ENCODE measurements at regions of chr7 and their contacts with region 1.

Region 1: DNA sequence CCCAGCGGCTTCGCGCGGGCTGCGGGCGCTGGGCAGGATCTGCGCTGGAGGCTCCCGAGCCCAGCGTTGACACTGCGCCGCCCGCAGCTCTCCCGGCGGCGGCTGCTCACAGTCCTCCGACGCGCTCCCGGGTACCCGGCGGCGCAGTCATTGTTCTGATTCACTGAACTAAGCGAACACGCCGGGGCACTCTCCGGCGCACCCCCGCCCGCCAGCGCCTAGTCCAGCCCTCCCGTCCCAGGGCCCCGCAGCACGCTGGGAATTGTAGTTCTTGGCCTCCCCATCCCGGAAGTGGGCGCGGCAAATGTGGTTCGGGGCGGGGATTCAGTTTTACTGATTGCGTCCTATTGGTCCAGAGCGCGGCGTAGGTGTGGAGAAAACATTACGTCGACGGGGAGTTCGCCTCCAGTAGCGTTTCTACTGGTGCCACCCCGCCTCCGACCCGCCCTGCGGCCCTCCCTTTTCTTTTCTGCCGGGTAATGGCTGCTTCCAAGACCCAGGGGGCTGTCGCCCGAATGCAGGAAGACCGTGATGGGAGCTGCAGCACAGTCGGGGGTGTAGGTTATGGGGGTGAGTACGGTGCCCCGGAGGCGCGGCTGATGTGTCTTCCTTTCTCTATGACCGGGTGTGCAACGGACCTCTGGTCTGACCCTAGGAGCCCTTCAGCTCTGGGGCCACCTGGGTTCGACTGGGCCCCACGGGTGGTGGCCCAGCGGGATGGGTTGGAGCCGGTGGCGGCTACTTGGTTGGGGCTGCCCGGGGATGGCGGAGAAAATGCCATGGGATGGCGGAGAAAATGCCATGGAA is at the starts of genes DOCK4 and ZNF277:
- DNase-seq: peak; percentile 98 to 100 (median 99)
- ATAC-seq: peak; percentile 86
- H3K4me3 ChIP-seq: peak within 1 kb of the TSS; percentile 89 to 94
- H3K4me3 Mint-ChIP-seq: peak within 1 kb of the TSS; percentile 97
- H3K27ac ChIP-seq: peak within 1 kb of the TSS; percentile 60 to 71
- H3K27ac Mint-ChIP-seq: peak within 1 kb of the TSS; percentile 90
- H3K4me1 ChIP-seq: peaks cover 28% of the 10 kb centered on the region
- H3K4me1 Mint-ChIP-seq: peaks cover 48% of the 10 kb centered on the region
- H3K27me3 ChIP-seq: peaks cover 4 to 23% of the 10 kb centered on the region in 2 experiments
- H3K27me3 Mint-ChIP-seq: peaks cover 25% of the 10 kb centered on the region
- CTCF ChIP-seq: no peak
- total RNA-seq, gene DOCK4: 0.16 to 0.17 TPM
- total RNA-seq, gene ZNF277: 19.6 to 22.5 TPM

Region 2: DNA sequence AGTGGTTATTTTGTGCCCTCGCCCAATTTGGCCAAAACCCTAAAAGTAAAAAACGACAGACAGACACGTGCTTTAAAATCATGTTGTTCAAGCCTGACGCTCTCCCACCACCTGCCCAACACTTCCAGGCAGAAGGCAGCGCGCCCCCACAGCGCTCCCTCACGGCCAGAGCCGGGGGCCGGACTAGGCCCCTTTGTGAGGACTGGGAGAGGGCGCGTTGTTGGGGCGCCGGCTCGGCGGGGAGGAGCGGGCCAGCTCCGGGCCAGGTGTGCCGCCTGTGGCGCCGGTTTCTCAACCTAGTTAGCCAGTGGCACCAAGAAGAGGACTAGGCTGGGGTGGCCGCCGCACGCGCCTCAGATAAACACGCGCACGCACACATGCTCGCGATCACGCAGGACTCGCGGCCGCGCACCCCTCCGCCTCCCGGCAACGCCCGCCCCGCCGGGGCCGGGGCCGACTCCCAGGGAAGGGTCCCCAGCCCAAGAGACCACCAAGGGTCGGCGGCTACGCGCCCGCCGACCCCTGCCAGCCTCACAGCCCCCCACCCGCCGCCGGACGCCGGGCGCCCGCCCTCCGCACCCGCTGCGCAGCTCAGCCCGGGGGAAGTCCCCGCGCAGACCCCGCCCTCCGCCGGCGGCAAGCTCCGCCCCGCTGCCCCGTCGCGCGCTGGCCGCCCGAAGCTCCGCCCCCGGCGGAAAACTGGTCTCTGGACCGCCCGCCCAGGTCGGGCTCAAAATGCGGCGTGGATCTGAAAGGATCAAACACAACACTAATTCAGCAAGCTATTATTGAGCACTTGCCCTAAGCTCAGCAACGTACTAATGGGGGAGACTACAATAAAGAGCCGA is 644.3 kb before region 1 on chr7 and contains the start of gene IMMP2L:
- CTCF ChIA-PET with region 1: no interaction called
- POLR2A ChIA-PET with region 1: no interaction called
- intact Hi-C with region 1: loop called (anchors 1 to 5 kb)
- DNase-seq: peak; percentile 82 to 95 (median 90)
- ATAC-seq: peak; percentile 95
- H3K4me3 ChIP-seq: peak within 1 kb of the TSS; percentile 61 to 85
- H3K4me3 Mint-ChIP-seq: peak within 1 kb of the TSS; percentile 92
- H3K27ac ChIP-seq: peak within 1 kb of the TSS; percentile 77 to 82
- H3K27ac Mint-ChIP-seq: peak within 1 kb of the TSS; percentile 96
- H3K4me1 ChIP-seq: peaks cover 18% of the 10 kb centered on the region
- H3K4me1 Mint-ChIP-seq: peaks cover 43% of the 10 kb centered on the region
- H3K27me3 ChIP-seq: no peaks in the 10 kb centered on the region
- H3K27me3 Mint-ChIP-seq: peaks cover 3% of the 10 kb centered on the region
- CTCF ChIP-seq: peak; percentile 15
- total RNA-seq, gene IMMP2L: 9.8 to 12.7 TPM

Region 3: GRCh38 chr7:112226701-112227276 is 20.3 kb after region 1 on chr7:
- CTCF ChIA-PET with region 1: no interaction called
- POLR2A ChIA-PET with region 1: no interaction called
- intact Hi-C with region 1: no loop called
- DNase-seq: no peak
- ATAC-seq: no peak
- H3K4me3 ChIP-seq: no peak overlapping the region
- H3K4me3 Mint-ChIP-seq: no peak overlapping the region
- H3K27ac ChIP-seq: no peak overlapping the region
- H3K27ac Mint-ChIP-seq: no peak overlapping the region
- H3K4me1 ChIP-seq: no peaks in the 10 kb centered on the region
- H3K4me1 Mint-ChIP-seq: peaks cover 51% of the 10 kb centered on the region
- H3K27me3 ChIP-seq: no peaks in the 10 kb centered on the region
- H3K27me3 Mint-ChIP-seq: no peaks in the 10 kb centered on the region
- CTCF ChIP-seq: no peak

Region 4: DNA sequence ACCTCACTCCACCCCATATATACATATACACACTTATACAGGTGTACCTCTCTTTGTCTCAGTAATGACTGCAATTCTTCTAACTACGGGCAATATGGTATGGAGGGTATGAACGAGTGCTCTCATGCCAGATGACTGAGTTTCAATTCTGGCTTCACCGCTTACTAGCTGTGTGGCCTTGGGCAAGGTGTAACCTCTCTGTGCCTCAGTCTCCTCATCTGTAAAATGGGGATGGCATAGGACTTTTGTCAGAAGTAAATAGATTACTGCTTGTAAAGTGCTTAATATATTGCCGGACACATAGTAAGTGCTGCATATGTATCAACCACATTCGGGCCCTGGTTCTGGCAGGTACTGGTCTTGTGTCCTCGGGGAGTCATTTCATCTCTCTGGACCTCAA is 183.7 kb after region 1 on chr7:
- CTCF ChIA-PET with region 1: no interaction called
- POLR2A ChIA-PET with region 1: no interaction called
- intact Hi-C with region 1: loop called (anchors 1 to 2 kb)
- DNase-seq: no peak
- ATAC-seq: no peak
- H3K4me3 ChIP-seq: no peak overlapping the region
- H3K4me3 Mint-ChIP-seq: peak overlapping the region; percentile 6
- H3K27ac ChIP-seq: no peak overlapping the region
- H3K27ac Mint-ChIP-seq: no peak overlapping the region
- H3K4me1 ChIP-seq: peaks cover 7% of the 10 kb centered on the region
- H3K4me1 Mint-ChIP-seq: peaks cover 12% of the 10 kb centered on the region
- H3K27me3 ChIP-seq: no peaks in the 10 kb centered on the region
- H3K27me3 Mint-ChIP-seq: peaks cover 3% of the 10 kb centered on the region
- CTCF ChIP-seq: no peak

Region 5: DNA sequence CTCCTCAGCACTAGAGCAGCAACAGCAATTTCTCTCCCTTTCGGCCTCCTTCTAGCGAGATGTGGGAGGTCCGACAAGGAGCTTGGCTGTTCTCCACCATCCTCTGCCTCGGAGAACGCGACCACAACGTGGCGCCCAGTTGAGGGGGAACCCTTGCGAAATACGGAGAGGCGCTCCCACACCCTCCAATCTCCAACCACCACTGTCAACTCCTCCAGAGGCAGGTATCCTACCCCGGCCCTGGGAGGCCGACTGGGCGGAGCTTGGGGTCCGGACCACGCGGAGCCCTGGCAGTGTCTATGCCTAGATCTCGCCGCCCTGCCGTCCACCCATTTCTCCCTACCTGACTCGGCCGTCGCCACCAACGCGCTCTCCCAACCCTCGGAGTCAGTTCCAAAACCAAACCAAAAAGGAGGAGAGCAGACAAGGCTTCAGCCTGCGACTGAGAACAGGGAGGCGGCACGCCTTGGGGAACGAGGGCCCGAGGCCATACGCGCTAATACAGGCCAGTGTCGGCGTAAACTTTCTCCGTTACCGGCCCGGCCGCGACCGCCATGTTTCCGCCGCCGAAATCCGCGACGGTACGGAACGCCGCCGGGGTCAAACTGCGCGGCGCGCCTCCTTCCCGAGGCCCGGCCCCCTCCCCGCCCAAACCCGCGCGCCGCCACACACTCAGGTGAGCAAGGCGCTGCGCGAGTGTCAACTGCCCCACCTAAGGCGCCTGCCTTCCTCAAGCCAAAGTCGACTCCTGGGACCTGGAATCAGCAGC is 583.6 kb after region 1 on chr7 and contains the start of gene TMEM168:
- CTCF ChIA-PET with region 1: no interaction called
- POLR2A ChIA-PET with region 1: no interaction called
- intact Hi-C with region 1: loop called (anchors 2 kb)
- DNase-seq: peak; percentile 71 to 91 (median 88)
- ATAC-seq: peak; percentile 91
- H3K4me3 ChIP-seq: peak within 1 kb of the TSS; percentile 94
- H3K4me3 Mint-ChIP-seq: peak within 1 kb of the TSS; percentile 89
- H3K27ac ChIP-seq: peak within 1 kb of the TSS; percentile 80 to 87
- H3K27ac Mint-ChIP-seq: peak within 1 kb of the TSS; percentile 90
- H3K4me1 ChIP-seq: peaks cover 20% of the 10 kb centered on the region
- H3K4me1 Mint-ChIP-seq: peaks cover 32% of the 10 kb centered on the region
- H3K27me3 ChIP-seq: no peaks in the 10 kb centered on the region
- H3K27me3 Mint-ChIP-seq: no peaks in the 10 kb centered on the region
- CTCF ChIP-seq: no peak
- total RNA-seq, gene TMEM168: 10.5 to 10.7 TPM

Region 6: GRCh38 chr7:112939574-112940314 is 733.3 kb after region 1 on chr7:
- CTCF ChIA-PET with region 1: no interaction called
- POLR2A ChIA-PET with region 1: no interaction called
- intact Hi-C with region 1: loop called (anchors 1 to 2 kb)
- DNase-seq: peak; percentile 98 to 100 (median 99)
- ATAC-seq: peak; percentile 94
- H3K4me3 ChIP-seq: peak overlapping the region; percentile 76 to 89
- H3K4me3 Mint-ChIP-seq: peak overlapping the region; percentile 93
- H3K27ac ChIP-seq: peak overlapping the region; percentile 75
- H3K27ac Mint-ChIP-seq: peak overlapping the region; percentile 92
- H3K4me1 ChIP-seq: peaks cover 27% of the 10 kb centered on the region
- H3K4me1 Mint-ChIP-seq: peaks cover 42% of the 10 kb centered on the region
- H3K27me3 ChIP-seq: no peaks in the 10 kb centered on the region
- H3K27me3 Mint-ChIP-seq: no peaks in the 10 kb centered on the region
- CTCF ChIP-seq: no peak

Region 7: GRCh38 chr7:113118074-113118959 is 911.9 kb after region 1 on chr7 and contains the start of gene SMIM30:
- CTCF ChIA-PET with region 1: no interaction called
- POLR2A ChIA-PET with region 1: no interaction called
- intact Hi-C with region 1: loop called (anchors 1 to 2 kb)
- DNase-seq: peak; percentile 76 to 93 (median 90)
- ATAC-seq: peak; percentile 100
- H3K4me3 ChIP-seq: peak within 1 kb of the TSS; percentile 58 to 66
- H3K4me3 Mint-ChIP-seq: peak within 1 kb of the TSS; percentile 96
- H3K27ac ChIP-seq: peak within 1 kb of the TSS; percentile 55 to 73
- H3K27ac Mint-ChIP-seq: peak within 1 kb of the TSS; percentile 98
- H3K4me1 ChIP-seq: peaks cover 6% of the 10 kb centered on the region
- H3K4me1 Mint-ChIP-seq: peaks cover 21% of the 10 kb centered on the region
- H3K27me3 ChIP-seq: no peaks in the 10 kb centered on the region
- H3K27me3 Mint-ChIP-seq: no peaks in the 10 kb centered on the region
- CTCF ChIP-seq: no peak
- total RNA-seq, gene SMIM30: 3.5 to 4.8 TPM

Measured in CD8-positive, alpha-beta T cell (primary cell).